Natural killer cell (primary cell): ENCODE measurements at regions of chr15 and their contacts with region 1.

Region 1: DNA sequence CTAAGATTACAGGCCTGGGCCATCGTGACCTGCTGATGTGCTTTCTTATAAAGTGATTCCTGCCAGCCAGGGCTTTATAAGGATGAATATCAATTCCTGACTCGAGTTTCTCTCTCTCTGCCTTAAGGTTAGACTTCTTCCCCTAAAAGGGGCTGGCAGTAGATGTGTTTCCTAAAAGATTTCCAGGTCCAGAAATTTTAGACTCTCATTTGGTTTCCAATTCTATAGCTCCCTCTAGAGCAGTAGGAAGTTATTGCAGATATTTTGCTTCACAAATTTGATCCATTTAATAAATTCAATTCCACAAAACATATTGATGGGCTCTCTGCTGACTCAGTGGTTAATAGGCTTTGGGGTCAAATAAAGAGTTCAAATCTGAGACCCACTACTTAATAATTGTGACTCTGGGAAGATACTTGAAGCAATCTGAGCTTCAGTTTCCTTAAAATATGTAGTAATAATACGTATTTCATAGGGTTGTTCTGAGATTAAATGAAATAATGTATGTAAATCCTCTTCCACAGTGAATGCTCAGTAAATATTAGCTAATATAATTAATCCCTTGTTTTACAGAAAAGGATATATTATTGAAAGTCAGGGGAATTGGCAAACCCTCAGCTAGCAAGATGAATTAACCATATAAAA is 2.1 kb downstream of the TRIM69 start:
- DNase-seq: peak in 1 of 2 donors; percentile 76
- ATAC-seq: peak; percentile 43 to 78 (median 59)
- H3K4me3 ChIP-seq: no peak overlapping the region
- H3K4me3 Mint-ChIP-seq: no peak overlapping the region
- H3K27ac ChIP-seq: no peak overlapping the region
- H3K27ac Mint-ChIP-seq: peak overlapping the region; percentile 64
- H3K4me1 ChIP-seq: peaks cover 17% of the 10 kb centered on the region
- H3K4me1 Mint-ChIP-seq: peaks cover 15 to 19% of the 10 kb centered on the region in 2 donors
- H3K27me3 ChIP-seq: no peaks in the 10 kb centered on the region
- H3K27me3 Mint-ChIP-seq: no peaks in the 10 kb centered on the region
- CTCF ChIP-seq: peak; percentile 88

Region 2: DNA sequence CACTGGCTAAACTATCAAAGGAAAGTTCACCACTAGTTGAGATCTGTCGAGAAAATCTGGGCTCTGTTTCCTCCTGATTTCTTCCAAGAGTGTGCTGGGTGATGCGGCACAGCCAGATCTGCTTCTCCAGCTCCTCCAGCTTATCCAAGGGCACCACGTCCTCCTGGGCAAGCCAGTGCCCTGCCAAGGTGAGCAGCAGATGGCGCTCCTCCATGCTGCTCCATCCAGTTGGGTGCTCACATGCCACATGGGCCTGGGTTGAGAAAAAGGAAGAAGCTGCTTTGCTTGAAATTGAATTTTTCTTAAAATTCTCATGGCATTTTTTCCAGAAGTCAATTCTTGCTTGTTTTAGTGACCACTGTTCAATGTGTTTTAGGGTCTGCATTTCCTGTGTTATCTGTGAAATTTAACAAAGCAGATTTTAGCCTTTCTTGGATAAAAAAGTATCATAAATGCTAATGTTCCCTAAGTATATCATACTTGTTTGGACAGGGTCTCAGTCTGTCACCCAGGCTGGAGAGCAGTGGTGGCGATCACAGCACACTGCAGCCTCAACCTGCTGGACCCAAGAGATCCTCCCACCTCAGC is 154.2 kb before region 1 on chr15:
- intact Hi-C with region 1: loop called (anchors 2 kb)
- DNase-seq: peak; percentile 24 to 75
- ATAC-seq: peak; percentile 70 to 74 (median 72)
- H3K4me3 ChIP-seq: no peak overlapping the region
- H3K4me3 Mint-ChIP-seq: no peak overlapping the region
- H3K27ac ChIP-seq: no peak overlapping the region
- H3K27ac Mint-ChIP-seq: peak overlapping the region; percentile 9 to 12
- H3K4me1 ChIP-seq: peaks cover 1% of the 10 kb centered on the region
- H3K4me1 Mint-ChIP-seq: peaks cover 5 to 8% of the 10 kb centered on the region in 2 donors
- H3K27me3 ChIP-seq: no peaks in the 10 kb centered on the region
- H3K27me3 Mint-ChIP-seq: no peaks in the 10 kb centered on the region
- CTCF ChIP-seq: peak; percentile 22

Region 3: DNA sequence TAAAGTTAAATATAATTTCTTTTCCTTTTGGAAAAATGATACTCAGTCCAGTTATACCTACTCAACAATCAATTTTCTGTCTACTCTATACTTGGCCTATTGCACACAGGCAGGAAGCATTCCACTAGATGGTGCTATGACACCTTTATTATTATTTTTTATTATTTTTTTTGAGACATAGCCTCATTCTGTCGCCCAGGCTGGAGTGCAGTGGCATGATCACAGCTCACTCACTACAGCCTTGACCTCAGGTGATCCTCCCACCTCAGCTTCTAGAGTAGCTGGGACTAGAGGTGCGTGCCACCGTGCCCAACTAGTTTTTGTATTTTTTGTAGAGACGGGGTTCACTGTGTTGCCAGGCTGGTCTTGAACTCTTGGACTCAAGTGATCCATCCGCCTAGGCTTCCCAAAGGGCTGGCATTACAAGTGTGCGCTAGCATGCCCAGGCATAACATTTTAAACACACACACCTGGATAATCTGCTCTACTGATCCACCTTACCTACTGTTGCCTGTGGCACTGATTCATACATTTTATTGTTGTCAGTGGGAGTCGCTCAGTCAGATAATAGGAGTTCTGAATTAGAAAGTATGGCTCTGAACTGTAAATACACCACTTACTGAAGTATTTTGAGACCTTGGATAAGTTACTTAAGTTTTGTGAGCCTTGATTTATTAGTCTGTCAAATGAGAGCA is 145.3 kb before region 1 on chr15:
- intact Hi-C with region 1: loop called (anchors 1 kb)
- DNase-seq: peak in 1 of 2 donors; percentile 73
- ATAC-seq: peak; percentile 62 to 78 (median 71)
- H3K4me3 ChIP-seq: no peak overlapping the region
- H3K4me3 Mint-ChIP-seq: no peak overlapping the region
- H3K27ac ChIP-seq: no peak overlapping the region
- H3K27ac Mint-ChIP-seq: no peak overlapping the region
- H3K4me1 ChIP-seq: no peaks in the 10 kb centered on the region
- H3K4me1 Mint-ChIP-seq: no peaks in the 10 kb centered on the region
- H3K27me3 ChIP-seq: no peaks in the 10 kb centered on the region
- H3K27me3 Mint-ChIP-seq: no peaks in the 10 kb centered on the region
- CTCF ChIP-seq: peak; percentile 61

Region 4: DNA sequence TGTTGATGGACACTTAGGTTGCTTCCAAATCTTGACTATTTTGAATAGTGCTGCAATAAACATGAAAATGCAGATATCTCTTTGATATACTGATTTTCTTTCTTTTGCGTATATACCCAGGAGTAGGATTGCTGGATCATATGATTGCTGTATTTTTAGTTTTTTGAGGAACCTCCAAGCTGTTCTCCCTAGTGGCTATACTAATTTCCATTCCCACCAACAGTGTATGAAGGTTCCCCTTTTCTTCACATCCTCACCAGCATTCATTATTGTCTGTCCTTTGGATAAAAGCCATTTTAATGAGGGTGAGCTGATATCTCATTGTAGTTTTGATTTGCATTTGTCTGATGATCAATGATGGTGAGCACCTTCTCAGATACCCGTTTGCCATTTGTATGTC is 39.8 kb before region 1 on chr15:
- intact Hi-C with region 1: no loop called
- DNase-seq: no peak
- ATAC-seq: no peak
- H3K4me3 ChIP-seq: no peak overlapping the region
- H3K4me3 Mint-ChIP-seq: no peak overlapping the region
- H3K27ac ChIP-seq: no peak overlapping the region
- H3K27ac Mint-ChIP-seq: no peak overlapping the region
- H3K4me1 ChIP-seq: no peaks in the 10 kb centered on the region
- H3K4me1 Mint-ChIP-seq: peaks cover 17 to 21% of the 10 kb centered on the region in 2 donors
- H3K27me3 ChIP-seq: no peaks in the 10 kb centered on the region
- H3K27me3 Mint-ChIP-seq: no peaks in the 10 kb centered on the region
- CTCF ChIP-seq: no peak

Region 5: DNA sequence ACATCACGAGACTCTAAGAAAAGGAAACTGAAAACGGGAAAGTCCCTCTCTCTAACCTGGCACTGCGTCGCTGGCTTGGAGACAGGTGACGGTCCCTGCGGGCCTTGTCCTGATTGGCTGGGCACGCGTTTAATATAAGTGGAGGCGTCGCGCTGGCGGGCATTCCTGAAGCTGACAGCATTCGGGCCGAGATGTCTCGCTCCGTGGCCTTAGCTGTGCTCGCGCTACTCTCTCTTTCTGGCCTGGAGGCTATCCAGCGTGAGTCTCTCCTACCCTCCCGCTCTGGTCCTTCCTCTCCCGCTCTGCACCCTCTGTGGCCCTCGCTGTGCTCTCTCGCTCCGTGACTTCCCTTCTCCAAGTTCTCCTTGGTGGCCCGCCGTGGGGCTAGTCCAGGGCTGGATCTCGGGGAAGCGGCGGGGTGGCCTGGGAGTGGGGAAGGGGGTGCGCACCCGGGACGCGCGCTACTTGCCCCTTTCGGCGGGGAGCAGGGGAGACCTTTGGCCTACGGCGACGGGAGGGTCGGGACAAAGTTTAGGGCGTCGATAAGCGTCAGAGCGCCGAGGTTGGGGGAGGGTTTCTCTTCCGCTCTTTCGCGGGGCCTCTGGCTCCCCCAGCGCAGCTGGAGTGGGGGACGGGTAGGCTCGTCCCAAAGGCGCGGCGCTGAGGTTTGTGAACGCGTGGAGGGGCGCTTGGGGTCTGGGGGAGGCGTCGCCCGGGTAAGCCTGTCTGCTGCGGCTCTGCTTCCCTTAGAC is 26.9 kb before region 1 on chr15 and contains the start of gene B2M:
- intact Hi-C with region 1: no loop called
- DNase-seq: peak; percentile 97 to 98
- ATAC-seq: peak; percentile 67 to 87 (median 75)
- H3K4me3 ChIP-seq: peak within 1 kb of the TSS; percentile 99
- H3K4me3 Mint-ChIP-seq: peak within 1 kb of the TSS; percentile 100
- H3K27ac ChIP-seq: peak within 1 kb of the TSS; percentile 95
- H3K27ac Mint-ChIP-seq: peak within 1 kb of the TSS; percentile 92 to 100
- H3K4me1 ChIP-seq: peaks cover 32% of the 10 kb centered on the region
- H3K4me1 Mint-ChIP-seq: peaks cover 77 to 78% of the 10 kb centered on the region in 2 donors
- H3K27me3 ChIP-seq: no peaks in the 10 kb centered on the region
- H3K27me3 Mint-ChIP-seq: no peaks in the 10 kb centered on the region
- CTCF ChIP-seq: no peak
- total RNA-seq, gene B2M: 7,484 to 8,893 (median 7,665) TPM